HCT116 (cell line): ENCODE measurements at regions of chr18 and their contacts with region 1.

Region 1: DNA sequence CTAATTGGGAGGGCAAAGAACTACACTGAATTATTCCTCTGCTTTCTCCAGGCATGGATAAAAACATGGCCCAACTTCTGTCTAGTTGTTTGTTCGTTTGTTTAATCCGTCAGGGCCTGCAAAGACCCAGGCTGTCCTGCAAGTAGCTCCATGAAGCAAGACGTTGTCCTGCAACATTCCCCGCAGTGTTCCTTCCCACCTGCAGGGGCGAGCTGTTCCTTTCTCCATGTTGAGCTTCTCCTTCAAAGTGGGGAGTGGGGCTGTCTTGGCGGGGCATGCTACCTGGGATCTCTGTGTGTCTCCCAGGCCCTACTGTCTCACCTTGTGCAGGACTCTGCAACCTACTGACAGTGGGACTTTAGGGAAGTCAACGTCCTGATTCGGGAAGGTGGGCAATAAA is 264.0 kb upstream of the SMIM21 start:
- DNase-seq: no peak
- ATAC-seq: no peak
- H3K4me3 ChIP-seq: no peak overlapping the region
- H3K27ac ChIP-seq: no peak overlapping the region
- H3K4me1 ChIP-seq: no peaks in the 10 kb centered on the region
- H3K27me3 ChIP-seq: no peaks in the 10 kb centered on the region
- CTCF ChIP-seq: peak in 2 of 3 experiments; percentile 24 to 39; a peak in 3 of 6 replicates
- POLR2A ChIP-seq: no peak
- RAD21 ChIP-seq: no peak

Region 2: GRCh38 chr18:75638776-75639471 is 52.6 kb before region 1 on chr18:
- CTCF ChIA-PET with region 1: no interaction called
- POLR2A ChIA-PET with region 1: no interaction called
- RAD21 ChIA-PET with region 1: no interaction called
- intact Hi-C with region 1: loop called (anchors 10 kb)
- DNase-seq: no peak
- ATAC-seq: no peak
- H3K4me3 ChIP-seq: no peak overlapping the region
- H3K27ac ChIP-seq: no peak overlapping the region
- H3K4me1 ChIP-seq: no peaks in the 10 kb centered on the region
- H3K27me3 ChIP-seq: no peaks in the 10 kb centered on the region
- CTCF ChIP-seq: no peak
- POLR2A ChIP-seq: no peak
- RAD21 ChIP-seq: no peak